ENCODE measurements at regions of chr5 and their contacts with region 1.

Region 1: DNA sequence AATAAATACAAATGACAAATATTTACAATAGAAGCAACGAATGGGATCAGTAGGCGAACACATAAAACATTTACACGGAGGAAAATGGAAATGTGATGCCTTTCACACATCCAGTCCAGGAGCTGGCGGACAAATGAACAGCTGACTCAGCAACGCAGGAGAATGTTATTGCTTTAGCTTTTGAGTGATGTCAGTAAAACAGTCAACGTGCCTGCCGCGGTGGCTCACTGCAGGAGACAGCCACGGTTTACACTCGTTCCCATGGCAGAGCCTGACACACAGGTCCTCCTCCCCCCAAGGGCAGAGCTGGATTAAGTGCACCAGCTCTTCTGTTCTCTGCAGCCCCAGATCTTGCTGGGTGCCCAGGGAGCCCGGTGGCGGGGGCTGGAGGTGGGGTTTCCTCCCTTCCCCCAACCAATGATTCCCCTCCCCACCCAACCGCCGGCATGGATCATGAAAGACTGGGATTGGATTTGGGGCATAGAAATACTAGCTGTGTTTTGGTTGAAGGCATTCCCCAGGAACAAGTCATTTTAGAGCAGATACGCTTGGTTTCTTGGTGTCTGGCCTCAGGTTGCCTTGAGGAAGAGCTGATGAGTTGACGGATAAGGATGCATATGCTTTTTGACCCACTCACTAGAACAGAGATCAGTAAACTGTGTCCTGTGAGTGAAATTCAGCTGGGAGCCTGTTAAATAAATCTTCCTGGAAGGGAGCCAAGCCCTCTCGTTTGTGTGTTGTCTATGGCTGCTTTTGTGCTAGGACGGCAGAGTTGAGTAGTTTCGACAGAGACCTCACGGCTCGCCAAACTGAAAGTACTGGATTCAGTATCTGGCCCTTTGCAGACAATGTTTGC is 12.5 kb downstream of the STC2 start:
- DNase-seq: no peak
- ATAC-seq: no peak
- H3K4me3 Mint-ChIP-seq: no peak overlapping the region
- H3K27ac Mint-ChIP-seq: no peak overlapping the region
- H3K4me1 Mint-ChIP-seq: no peaks in the 10 kb centered on the region
- H3K27me3 Mint-ChIP-seq: peaks cover 5% of the 10 kb centered on the region

Region 2: GRCh38 chr5:173187054-173187789 is 128.5 kb before region 1 on chr5:
- CTCF ChIA-PET with region 1: no interaction called
- POLR2A ChIA-PET with region 1: no interaction called
- DNase-seq: peak; percentile 22
- ATAC-seq: peak; percentile 53
- H3K4me3 Mint-ChIP-seq: no peak overlapping the region
- H3K27ac Mint-ChIP-seq: no peak overlapping the region
- H3K4me1 Mint-ChIP-seq: no peaks in the 10 kb centered on the region
- H3K27me3 Mint-ChIP-seq: no peaks in the 10 kb centered on the region

Region 3: GRCh38 chr5:173293817-173294672 is 21.7 kb before region 1 on chr5:
- CTCF ChIA-PET with region 1: interaction called, 20 read pairs
- POLR2A ChIA-PET with region 1: no interaction called
- DNase-seq: peak; percentile 77
- ATAC-seq: peak; percentile 88
- H3K4me3 Mint-ChIP-seq: peak overlapping the region; percentile 31
- H3K27ac Mint-ChIP-seq: no peak overlapping the region
- H3K4me1 Mint-ChIP-seq: peaks cover 13% of the 10 kb centered on the region
- H3K27me3 Mint-ChIP-seq: peaks cover 38% of the 10 kb centered on the region

Measured in activated CD8-positive, alpha-beta T cell treated with anti-CD3 and anti-CD28 coated beads, Interleukin-2, amount 10 ng/mL, durations not matched to agents 7 days and 5 days (primary cell).